PC-3 (cell line): ENCODE measurements at regions of chr7 and their contacts with region 1.

Region 1: GRCh38 chr7:31938653-31939052 is 131.6 kb downstream of the PDE1C start:
- DNase-seq: peak; percentile 85
- ATAC-seq: peak; percentile 71
- H3K4me3 ChIP-seq: no peak overlapping the region
- H3K27ac ChIP-seq: peak overlapping the region; percentile 63
- H3K4me1 ChIP-seq: peaks cover 63% of the 10 kb centered on the region
- H3K27me3 ChIP-seq: no peaks in the 10 kb centered on the region
- CTCF ChIP-seq: peak; percentile 49

Region 2: GRCh38 chr7:31776616-31777015 is 162.0 kb before region 1 on chr7:
- CTCF ChIA-PET with region 1: no interaction called
- POLR2A ChIA-PET with region 1: no interaction called
- intact Hi-C with region 1: loop called (anchors 5 kb)
- DNase-seq: peak; percentile 89
- ATAC-seq: peak; percentile 98
- H3K4me3 ChIP-seq: no peak overlapping the region
- H3K27ac ChIP-seq: no peak overlapping the region
- H3K4me1 ChIP-seq: peaks cover 16% of the 10 kb centered on the region
- H3K27me3 ChIP-seq: no peaks in the 10 kb centered on the region
- CTCF ChIP-seq: no peak

Region 3: DNA sequence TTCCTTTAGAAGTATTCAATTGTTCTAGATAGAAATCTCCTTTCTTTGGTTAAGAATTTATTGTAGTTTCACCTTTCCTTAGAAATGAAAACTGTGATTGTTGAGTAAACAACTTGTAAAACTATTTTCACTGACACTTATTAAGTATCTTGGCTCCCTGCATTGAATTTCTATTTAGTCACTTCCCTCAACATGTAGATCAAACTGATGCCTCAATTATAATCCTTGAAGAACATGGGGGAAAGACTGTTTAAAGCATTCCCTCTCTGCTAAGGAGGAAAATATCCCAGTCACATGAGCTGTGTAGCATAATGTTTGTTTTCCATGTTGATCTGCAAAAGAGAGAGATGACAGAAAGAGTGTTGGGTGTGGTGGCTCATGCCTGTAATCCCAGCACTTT is 31.8 kb after region 1 on chr7:
- CTCF ChIA-PET with region 1: no interaction called
- POLR2A ChIA-PET with region 1: no interaction called
- intact Hi-C with region 1: loop called (anchors 1 kb)
- DNase-seq: peak; percentile 52
- ATAC-seq: peak; percentile 81
- H3K4me3 ChIP-seq: peak overlapping the region; percentile 46
- H3K27ac ChIP-seq: peak overlapping the region; percentile 81
- H3K4me1 ChIP-seq: peaks cover 10% of the 10 kb centered on the region
- H3K27me3 ChIP-seq: no peaks in the 10 kb centered on the region
- CTCF ChIP-seq: no peak

Region 4: DNA sequence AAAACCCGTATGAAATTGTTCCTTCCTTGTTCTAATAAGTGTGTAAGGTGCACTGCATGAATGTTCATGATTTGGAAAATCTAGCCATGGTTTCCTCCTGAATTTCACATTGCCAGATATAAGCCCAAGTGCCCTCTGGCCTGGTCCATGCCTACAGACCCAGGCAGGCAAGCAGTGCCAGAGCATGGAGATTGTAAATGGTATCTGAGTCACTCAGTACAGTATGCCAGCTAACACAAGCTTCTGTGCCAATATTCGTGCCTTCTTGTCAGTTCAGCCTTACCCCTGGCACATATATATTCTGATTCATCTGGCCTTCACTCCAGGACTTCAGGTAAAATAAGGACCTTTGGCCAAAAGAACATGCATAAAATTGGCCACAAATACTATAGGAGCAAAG is 170.0 kb after region 1 on chr7:
- CTCF ChIA-PET with region 1: no interaction called
- POLR2A ChIA-PET with region 1: no interaction called
- intact Hi-C with region 1: loop called (anchors 2 kb)
- DNase-seq: peak; percentile 97
- ATAC-seq: peak; percentile 98
- H3K4me3 ChIP-seq: no peak overlapping the region
- H3K27ac ChIP-seq: peak overlapping the region; percentile 79
- H3K4me1 ChIP-seq: peaks cover 20% of the 10 kb centered on the region
- H3K27me3 ChIP-seq: no peaks in the 10 kb centered on the region
- CTCF ChIP-seq: no peak

Region 5: DNA sequence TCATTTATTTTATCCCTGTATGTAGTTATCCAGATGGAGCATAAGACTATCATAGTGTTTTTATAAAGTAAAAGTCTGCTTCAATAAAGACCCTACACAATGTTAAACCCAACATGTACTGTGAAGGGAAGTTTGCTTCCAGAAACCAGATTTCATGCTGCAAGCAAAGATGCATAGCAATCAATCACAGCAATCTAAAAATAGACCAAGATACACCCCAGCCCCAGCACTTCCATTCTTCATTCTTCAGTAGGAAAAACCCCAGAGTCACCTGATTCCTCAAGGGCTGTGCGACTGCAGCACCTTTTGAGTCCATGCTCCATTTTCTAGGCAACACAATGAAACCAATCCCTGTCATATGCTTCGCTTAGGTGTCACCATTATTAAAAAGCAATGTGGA is 198.4 kb after region 1 on chr7:
- CTCF ChIA-PET with region 1: no interaction called
- POLR2A ChIA-PET with region 1: no interaction called
- intact Hi-C with region 1: no loop called
- DNase-seq: no peak
- ATAC-seq: no peak
- H3K4me3 ChIP-seq: no peak overlapping the region
- H3K27ac ChIP-seq: no peak overlapping the region
- H3K4me1 ChIP-seq: peaks cover 1% of the 10 kb centered on the region; the same call in 1 of the 2 replicates
- H3K27me3 ChIP-seq: no peaks in the 10 kb centered on the region
- CTCF ChIP-seq: no peak

Region 6: DNA sequence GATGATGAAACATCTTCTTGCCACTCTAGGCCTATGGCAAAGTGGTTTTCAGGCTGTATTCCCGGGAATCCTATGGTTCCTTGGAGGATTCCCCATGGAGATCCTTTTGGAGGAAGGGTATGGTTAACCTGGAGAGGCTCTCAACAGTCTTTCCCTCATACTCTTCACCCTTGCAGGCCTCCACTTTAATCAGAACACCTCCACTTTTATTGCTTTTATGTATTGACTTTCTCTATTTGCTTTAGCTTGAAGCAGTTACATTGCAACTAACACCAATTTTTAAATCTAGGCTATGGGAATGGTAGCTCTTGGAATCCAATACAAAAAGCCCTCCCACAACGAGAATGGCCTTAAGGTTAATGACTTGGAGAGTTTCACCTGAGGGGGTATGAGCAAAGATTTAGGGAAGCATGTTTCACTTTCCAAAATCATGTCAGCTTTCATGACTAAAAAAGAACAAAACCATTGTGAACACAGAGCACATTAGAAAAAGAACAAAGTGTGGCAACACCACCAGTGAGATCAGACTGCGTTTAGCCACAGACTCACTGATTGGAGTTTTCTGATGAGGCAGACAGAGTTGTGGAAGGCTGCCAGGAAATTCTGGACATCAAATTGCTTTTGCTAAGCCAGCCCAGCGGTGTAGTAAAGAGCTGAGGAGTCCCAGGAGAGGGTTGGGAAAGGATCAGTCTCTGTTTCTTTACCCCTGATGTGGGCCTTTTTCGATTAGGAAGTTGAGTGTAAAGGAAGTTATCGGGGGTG is 1836.3 kb after region 1 on chr7:
- CTCF ChIA-PET with region 1: no interaction called
- POLR2A ChIA-PET with region 1: no interaction called
- intact Hi-C with region 1: no loop called
- DNase-seq: peak; percentile 7
- ATAC-seq: no peak
- H3K4me3 ChIP-seq: no peak overlapping the region
- H3K27ac ChIP-seq: no peak overlapping the region
- H3K4me1 ChIP-seq: peaks cover 16% of the 10 kb centered on the region
- H3K27me3 ChIP-seq: no peaks in the 10 kb centered on the region
- CTCF ChIP-seq: no peak